Activated B cell treated with CpG ODN at 0.5 μM for 24 hours (primary cell): ENCODE measurements at regions of chr16 and their contacts with region 1.

Region 1: DNA sequence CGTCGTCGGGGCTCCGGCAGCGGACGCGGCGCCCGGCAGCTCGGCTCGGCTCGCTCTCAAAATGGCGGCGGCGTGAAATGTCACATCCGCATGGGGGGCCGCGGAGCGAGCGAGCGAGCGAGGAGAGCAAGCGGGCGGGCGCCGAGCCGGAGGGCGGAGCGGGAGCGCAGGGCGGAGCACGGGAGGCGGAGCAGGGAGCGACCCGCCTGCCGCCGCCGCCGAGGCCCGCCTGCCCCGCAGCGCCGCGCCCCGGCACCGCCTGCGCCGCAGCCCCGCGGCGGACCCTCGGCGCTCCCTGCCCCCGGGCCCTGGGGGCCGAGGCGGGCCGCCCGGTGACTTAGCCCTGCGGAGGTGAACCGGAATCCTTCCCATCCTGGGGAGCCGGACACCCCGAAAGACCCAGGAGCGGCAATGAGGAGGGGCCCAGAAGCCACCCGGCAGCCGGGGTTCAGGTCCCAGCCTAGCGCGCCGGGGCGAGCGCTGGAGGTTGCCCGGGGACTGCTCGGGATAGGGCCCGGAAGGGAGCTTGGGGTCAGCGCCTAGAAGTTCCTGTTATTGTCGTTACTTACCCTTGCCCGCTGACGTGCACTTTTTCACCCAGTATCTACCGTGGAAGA is at the start of gene USP7:
- DNase-seq: peak; percentile 90
- ATAC-seq: peak; percentile 90
- H3K4me3 Mint-ChIP-seq: peak within 1 kb of the TSS; percentile 81
- H3K27ac Mint-ChIP-seq: peak within 1 kb of the TSS; percentile 93
- H3K4me1 Mint-ChIP-seq: peaks cover 35% of the 10 kb centered on the region
- H3K27me3 Mint-ChIP-seq: no peaks in the 10 kb centered on the region
- CTCF ChIP-seq: no peak
- total RNA-seq, gene USP7: 173 and 193 TPM in 2 replicates

Region 2: DNA sequence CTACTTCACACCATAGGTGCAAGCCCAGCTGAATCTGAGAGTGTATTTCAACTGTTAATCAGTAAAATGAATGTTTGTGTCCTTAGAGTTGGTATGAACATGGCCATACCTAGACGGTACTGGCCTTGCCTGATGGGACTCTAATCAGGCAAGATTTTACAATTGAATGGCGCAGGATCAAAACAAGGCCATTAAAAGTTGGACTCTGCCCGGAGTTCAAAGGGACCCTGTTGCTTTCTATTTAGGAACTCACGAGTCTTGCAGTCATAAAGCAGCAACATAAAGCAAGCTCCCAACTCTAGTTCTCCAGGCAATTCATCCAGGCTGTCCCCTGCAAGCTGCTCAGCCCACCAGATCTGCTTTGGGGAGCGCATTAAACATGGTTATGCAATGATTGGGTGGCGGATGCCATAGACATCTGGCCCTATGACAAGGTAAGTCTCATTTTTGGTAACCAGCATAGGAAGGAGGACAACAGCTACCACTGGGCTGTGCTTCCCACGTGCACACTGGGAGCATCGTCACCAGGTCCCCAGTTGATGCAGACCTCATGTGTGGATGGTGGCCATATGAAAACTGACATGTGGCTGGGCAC is 175.3 kb before region 1 on chr16:
- CTCF ChIA-PET with region 1: no interaction called
- POLR2A ChIA-PET with region 1: no interaction called
- intact Hi-C with region 1: no loop called
- DNase-seq: no peak
- ATAC-seq: no peak
- H3K4me3 Mint-ChIP-seq: no peak overlapping the region
- H3K27ac Mint-ChIP-seq: no peak overlapping the region
- H3K4me1 Mint-ChIP-seq: peaks cover 5% of the 10 kb centered on the region
- H3K27me3 Mint-ChIP-seq: no peaks in the 10 kb centered on the region
- CTCF ChIP-seq: no peak

Region 3: DNA sequence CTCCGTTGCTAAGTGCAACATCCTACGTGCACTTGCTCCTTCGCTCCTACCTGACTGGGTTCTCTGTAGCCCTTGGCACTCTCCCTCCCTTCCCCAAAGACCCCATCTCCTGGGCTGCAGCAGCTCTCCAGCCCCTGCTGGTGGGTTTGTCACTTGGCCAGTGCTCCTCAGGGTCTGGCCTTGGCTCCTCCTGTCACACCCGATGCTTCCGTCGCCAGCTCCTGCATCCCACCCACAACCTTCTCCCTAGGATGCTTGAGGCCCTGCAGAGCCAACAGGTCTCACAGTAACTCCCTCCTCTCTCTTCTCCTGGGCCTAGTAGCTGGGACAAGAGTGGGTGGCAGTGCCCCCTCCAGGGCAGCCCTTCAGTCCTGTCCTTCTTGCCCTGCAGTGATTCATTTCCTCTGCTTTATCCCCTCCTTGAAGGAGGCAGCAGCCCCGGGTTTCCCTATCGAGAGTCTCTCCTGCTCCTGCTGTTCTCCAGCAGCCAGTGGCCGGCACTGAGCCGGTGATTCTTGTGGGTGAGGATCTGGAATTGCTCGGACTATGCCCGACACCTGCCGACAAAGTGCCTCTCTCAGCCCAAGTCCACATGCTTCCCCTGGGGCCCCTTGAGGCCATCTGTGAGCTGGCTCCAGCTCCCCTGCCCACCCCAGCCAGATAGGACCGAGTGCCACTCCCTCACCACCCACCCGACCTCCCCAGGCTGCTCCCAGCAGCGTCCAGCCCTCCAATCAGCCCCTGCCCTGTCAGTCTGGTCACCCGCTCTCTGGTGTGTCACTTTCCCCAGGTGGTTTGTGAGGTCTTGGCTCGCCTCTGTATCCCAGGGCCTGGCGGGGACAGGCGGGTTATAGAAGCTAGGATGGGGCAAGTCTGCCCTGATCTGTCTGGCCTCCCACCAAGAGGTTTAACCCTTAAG is 78.0 kb before region 1 on chr16:
- CTCF ChIA-PET with region 1: interaction called, 3 read pairs
- POLR2A ChIA-PET with region 1: interaction called, 22 read pairs
- intact Hi-C with region 1: loop called (anchors 1 kb)
- DNase-seq: no peak
- ATAC-seq: peak; percentile 22
- H3K4me3 Mint-ChIP-seq: no peak overlapping the region
- H3K27ac Mint-ChIP-seq: peak overlapping the region; percentile 19
- H3K4me1 Mint-ChIP-seq: peaks cover 24% of the 10 kb centered on the region
- H3K27me3 Mint-ChIP-seq: peaks cover 10% of the 10 kb centered on the region
- CTCF ChIP-seq: no peak

Region 4: GRCh38 chr16:8928467-8928957 is 35.4 kb before region 1 on chr16:
- CTCF ChIA-PET with region 1: no interaction called
- POLR2A ChIA-PET with region 1: no interaction called
- intact Hi-C with region 1: loop called (anchors 5 kb)
- DNase-seq: no peak
- ATAC-seq: peak; percentile 43
- H3K4me3 Mint-ChIP-seq: peak overlapping the region; percentile 41
- H3K27ac Mint-ChIP-seq: peak overlapping the region; percentile 79
- H3K4me1 Mint-ChIP-seq: peaks cover 51% of the 10 kb centered on the region
- H3K27me3 Mint-ChIP-seq: no peaks in the 10 kb centered on the region
- CTCF ChIP-seq: no peak

Region 5: DNA sequence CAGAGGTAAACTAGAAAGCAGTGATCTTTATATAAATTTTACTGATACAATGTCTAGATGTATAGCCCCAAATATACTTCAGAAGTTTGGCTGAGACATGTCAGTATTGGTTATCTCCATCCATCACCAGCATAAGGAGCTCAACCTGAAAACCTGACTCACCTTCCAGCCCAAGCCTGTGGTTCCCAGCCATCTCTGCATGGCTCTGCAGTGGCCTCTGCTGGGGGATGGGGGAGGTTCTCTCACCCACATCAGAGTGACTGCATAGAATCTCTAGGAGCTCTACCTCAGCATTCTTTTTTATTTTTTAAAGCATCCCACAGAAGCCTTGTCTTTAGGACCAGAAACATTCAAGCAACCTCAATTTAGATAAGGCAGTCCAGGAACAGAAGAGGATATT is 27.5 kb before region 1 on chr16:
- CTCF ChIA-PET with region 1: interaction called, 9 read pairs
- POLR2A ChIA-PET with region 1: interaction called, 8 read pairs
- intact Hi-C with region 1: loop called (anchors 1 kb)
- DNase-seq: no peak
- ATAC-seq: peak; percentile 98
- H3K4me3 Mint-ChIP-seq: no peak overlapping the region
- H3K27ac Mint-ChIP-seq: peak overlapping the region; percentile 50
- H3K4me1 Mint-ChIP-seq: peaks cover 92% of the 10 kb centered on the region
- H3K27me3 Mint-ChIP-seq: no peaks in the 10 kb centered on the region
- CTCF ChIP-seq: no peak

Region 6: GRCh38 chr16:8943966-8944759 is 19.8 kb before region 1 on chr16:
- CTCF ChIA-PET with region 1: interaction called, 3 read pairs
- POLR2A ChIA-PET with region 1: interaction called, 13 read pairs
- intact Hi-C with region 1: loop called (anchors 1 kb)
- DNase-seq: no peak
- ATAC-seq: peak; percentile 83
- H3K4me3 Mint-ChIP-seq: peak overlapping the region; percentile 80
- H3K27ac Mint-ChIP-seq: peak overlapping the region; percentile 88
- H3K4me1 Mint-ChIP-seq: peaks cover 99% of the 10 kb centered on the region
- H3K27me3 Mint-ChIP-seq: no peaks in the 10 kb centered on the region
- CTCF ChIP-seq: no peak

Region 7: GRCh38 chr16:8950580-8951077 is 13.3 kb before region 1 on chr16:
- CTCF ChIA-PET with region 1: interaction called, 3 read pairs
- POLR2A ChIA-PET with region 1: interaction called, 13 read pairs
- intact Hi-C with region 1: loop called (anchors 1 kb)
- DNase-seq: no peak
- ATAC-seq: no peak
- H3K4me3 Mint-ChIP-seq: peak overlapping the region; percentile 35
- H3K27ac Mint-ChIP-seq: peak overlapping the region; percentile 30
- H3K4me1 Mint-ChIP-seq: peaks cover 88% of the 10 kb centered on the region
- H3K27me3 Mint-ChIP-seq: no peaks in the 10 kb centered on the region
- CTCF ChIP-seq: no peak

Region 8: DNA sequence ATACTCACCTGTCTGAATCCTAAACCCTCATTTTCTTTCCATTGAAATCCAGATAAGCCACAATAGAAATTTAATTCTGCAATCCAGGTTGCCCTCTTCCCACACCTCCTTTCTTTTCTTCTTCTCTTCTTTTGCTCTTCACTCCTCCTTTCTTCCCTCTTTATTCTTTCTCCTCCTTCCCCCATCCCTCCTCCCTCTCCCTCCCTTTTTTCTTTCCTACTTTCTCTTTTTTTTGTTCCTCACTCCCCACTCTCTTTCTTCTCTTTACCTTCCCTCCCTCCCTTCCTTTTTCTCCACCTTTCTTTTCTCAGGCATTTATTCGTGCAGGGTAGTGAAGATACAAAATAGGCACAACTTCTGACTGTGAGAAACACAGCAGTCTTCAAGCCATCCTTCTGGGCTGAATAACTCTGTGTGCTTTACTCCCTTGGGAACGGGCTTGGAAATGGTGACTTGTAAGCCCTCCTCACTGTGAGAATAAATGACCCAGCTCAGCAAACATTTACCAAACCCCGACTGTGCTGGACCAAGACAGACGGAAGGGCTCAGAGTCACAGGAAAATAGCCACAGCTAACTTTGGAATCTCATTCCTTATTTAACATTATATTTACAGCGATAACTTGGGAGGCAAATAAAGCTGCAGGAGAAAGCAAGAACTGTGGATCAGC is 268.3 kb after region 1 on chr16:
- CTCF ChIA-PET with region 1: no interaction called
- POLR2A ChIA-PET with region 1: no interaction called
- intact Hi-C with region 1: no loop called
- DNase-seq: no peak
- ATAC-seq: no peak
- H3K4me3 Mint-ChIP-seq: no peak overlapping the region
- H3K27ac Mint-ChIP-seq: no peak overlapping the region
- H3K4me1 Mint-ChIP-seq: no peaks in the 10 kb centered on the region
- H3K27me3 Mint-ChIP-seq: peaks cover 18% of the 10 kb centered on the region
- CTCF ChIP-seq: no peak